ENCODE measurements at regions of chr10 and their contacts with region 1.

Region 1: DNA sequence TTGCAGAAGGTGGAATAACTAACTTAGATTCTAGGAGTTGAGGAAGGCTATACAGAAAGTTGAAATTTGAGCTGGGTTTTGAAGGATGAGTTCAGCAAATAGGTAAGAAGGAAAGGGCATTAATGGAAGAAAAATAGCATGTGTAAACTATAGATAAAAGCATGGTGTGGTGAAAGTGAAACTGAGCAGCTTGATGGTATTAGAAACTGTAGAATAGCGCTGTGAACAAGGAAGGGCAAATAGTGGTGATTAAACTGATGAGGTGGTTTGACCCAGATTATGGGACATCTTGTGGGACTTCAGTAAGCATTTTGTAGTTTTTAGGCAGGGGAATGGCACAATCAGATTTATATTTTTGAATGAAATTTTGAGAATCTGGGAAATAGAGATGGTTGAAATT is 90.5 kb downstream of the EXOC6 start:
- DNase-seq: no peak
- ATAC-seq: no peak
- H3K4me3 ChIP-seq: no peak overlapping the region
- H3K4me3 Mint-ChIP-seq: no peak overlapping the region
- H3K27ac ChIP-seq: no peak overlapping the region
- H3K27ac Mint-ChIP-seq: no peak overlapping the region
- H3K4me1 ChIP-seq: no peaks in the 10 kb centered on the region
- H3K4me1 Mint-ChIP-seq: no peaks in the 10 kb centered on the region
- H3K27me3 ChIP-seq: no peaks in the 10 kb centered on the region
- H3K27me3 Mint-ChIP-seq: no peaks in the 10 kb centered on the region
- CTCF ChIP-seq: no peak

Region 2: GRCh38 chr10:92965314-92965713 is 26.5 kb after region 1 on chr10:
- CTCF ChIA-PET with region 1: interaction called, 3 read pairs
- POLR2A ChIA-PET with region 1: no interaction called
- intact Hi-C with region 1: loop called in 1 of 2 experiments (anchors 1 kb)
- DNase-seq: peak in 2 of 9 experiments; percentile 33 to 49
- ATAC-seq: no peak
- H3K4me3 ChIP-seq: no peak overlapping the region
- H3K4me3 Mint-ChIP-seq: no peak overlapping the region
- H3K27ac ChIP-seq: no peak overlapping the region
- H3K27ac Mint-ChIP-seq: no peak overlapping the region
- H3K4me1 ChIP-seq: no peaks in the 10 kb centered on the region
- H3K4me1 Mint-ChIP-seq: no peaks in the 10 kb centered on the region
- H3K27me3 ChIP-seq: no peaks in the 10 kb centered on the region
- H3K27me3 Mint-ChIP-seq: no peaks in the 10 kb centered on the region
- CTCF ChIP-seq: peak; percentile 60